ENCODE measurements at regions of chr6 and their contacts with region 1.

Region 1: DNA sequence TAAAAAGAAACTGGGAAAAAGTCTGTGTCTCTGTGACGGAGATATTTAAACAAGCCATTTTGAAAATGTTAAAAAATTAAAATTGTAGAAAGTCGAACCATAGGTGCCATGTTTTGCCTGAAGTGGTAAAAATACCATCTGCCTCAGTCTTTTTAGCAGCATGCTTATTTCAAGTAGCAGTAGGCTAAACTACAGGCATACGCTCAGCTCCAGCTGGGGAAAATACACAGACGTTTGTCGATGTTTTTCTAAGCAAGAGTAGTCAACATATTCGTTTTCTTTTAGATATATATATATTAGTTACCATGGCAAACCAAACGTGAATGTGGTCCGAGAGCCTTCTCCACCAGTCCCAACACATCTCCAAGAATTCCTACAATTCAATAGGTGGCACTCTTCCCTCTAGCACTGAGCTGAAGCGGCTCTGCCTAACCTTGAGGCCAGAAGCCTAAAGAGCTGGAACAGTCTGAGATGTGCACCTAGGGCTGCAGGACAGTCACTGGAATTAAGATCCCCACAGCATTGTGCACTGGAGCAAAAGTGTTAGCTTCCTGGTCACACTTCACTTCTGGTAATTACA is 70.2 kb upstream of the BEND3 start:
- DNase-seq: peak; percentile 34
- H3K4me3 ChIP-seq: no peak overlapping the region
- H3K27ac ChIP-seq: no peak overlapping the region
- H3K4me1 ChIP-seq: no peaks in the 10 kb centered on the region
- H3K27me3 ChIP-seq: no peaks in the 10 kb centered on the region
- CTCF ChIP-seq: peak; percentile 15 to 54

Region 2: GRCh38 chr6:107418118-107418517 is 232.6 kb after region 1 on chr6:
- CTCF ChIA-PET with region 1: no interaction called
- dilution Hi-C with region 1: no loop called
- in situ Hi-C with region 1: no loop called
- intact Hi-C with region 1: loop called (anchors 2 kb)
- DNase-seq: peak; percentile 9
- H3K4me3 ChIP-seq: no peak overlapping the region
- H3K27ac ChIP-seq: no peak overlapping the region
- H3K4me1 ChIP-seq: no peaks in the 10 kb centered on the region
- H3K27me3 ChIP-seq: no peaks in the 10 kb centered on the region
- CTCF ChIP-seq: peak; percentile 45 to 53

Region 3: DNA sequence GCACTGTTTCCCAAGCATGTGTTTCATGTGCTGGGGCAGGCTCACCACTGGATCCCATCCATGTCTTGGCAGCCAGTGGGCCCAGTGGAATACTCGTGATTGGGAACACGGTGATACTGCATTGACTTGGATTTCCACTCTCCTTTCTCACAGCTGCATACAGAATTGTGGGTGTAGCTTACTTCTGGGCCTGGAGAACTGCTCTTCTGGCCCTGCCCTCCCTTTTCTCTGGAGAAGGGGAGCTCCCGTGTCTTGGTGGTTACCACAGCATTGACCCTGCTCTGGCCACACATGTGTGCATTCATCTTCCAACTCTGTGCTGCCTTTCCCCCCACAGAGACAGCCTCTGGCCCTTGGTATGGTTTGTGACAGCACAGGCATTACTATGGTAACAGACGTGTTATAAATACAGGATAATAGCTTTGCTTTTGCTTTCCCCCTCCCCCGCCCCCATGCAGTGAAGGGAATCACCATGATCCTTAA is 326.1 kb after region 1 on chr6:
- CTCF ChIA-PET with region 1: no interaction called
- dilution Hi-C with region 1: no loop called
- in situ Hi-C with region 1: no loop called
- intact Hi-C with region 1: no loop called
- DNase-seq: no peak
- H3K4me3 ChIP-seq: no peak overlapping the region
- H3K27ac ChIP-seq: no peak overlapping the region
- H3K4me1 ChIP-seq: no peaks in the 10 kb centered on the region
- H3K27me3 ChIP-seq: peaks cover 2% of the 10 kb centered on the region
- CTCF ChIP-seq: no peak

Region 4: DNA sequence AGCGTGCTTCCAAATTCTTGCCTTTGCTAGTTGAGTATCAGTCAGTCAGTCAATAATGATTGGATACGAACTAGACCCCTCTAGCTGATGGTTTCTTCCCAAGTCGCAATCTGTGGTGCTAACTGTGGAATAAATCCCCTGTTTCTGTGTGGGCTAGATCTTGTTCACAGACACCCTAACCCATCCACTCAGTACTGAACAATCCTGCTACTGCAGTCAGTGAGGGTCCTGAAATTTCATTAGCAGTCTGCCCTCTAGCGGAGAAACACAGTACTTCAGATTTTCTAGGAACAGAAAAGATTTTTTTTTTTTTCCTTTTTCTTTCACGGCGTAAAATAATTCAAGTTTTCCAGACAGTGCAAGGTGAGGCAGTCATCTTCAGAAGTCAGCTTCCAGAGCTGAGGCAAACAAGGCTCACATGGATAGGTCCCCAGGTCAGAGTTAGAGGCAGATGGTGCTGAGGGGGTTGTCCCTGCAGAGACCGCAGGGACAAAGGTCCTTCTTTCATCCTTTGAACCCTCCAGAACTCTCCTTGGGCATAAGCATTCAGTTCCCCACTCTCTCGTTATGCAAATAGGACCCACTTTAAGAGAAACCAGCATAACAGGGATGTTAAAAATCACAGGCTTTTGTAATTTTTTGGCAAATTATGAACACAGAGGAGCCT is 519.0 kb after region 1 on chr6:
- CTCF ChIA-PET with region 1: no interaction called
- dilution Hi-C with region 1: no loop called
- in situ Hi-C with region 1: no loop called
- intact Hi-C with region 1: loop called (anchors 1 kb)
- DNase-seq: no peak
- H3K4me3 ChIP-seq: no peak overlapping the region
- H3K27ac ChIP-seq: no peak overlapping the region
- H3K4me1 ChIP-seq: no peaks in the 10 kb centered on the region
- H3K27me3 ChIP-seq: no peaks in the 10 kb centered on the region
- CTCF ChIP-seq: peak; percentile 74 to 75